ENCODE measurements at regions of chr5 and their contacts with region 1.

Region 1: GRCh38 chr5:141960449-141961202 is 2.6 kb upstream of the PCDH12 start:
- DNase-seq: peak; percentile 97
- H3K4me3 Mint-ChIP-seq: peak overlapping the region; percentile 33
- H3K27ac Mint-ChIP-seq: peak overlapping the region; percentile 74
- H3K4me1 Mint-ChIP-seq: peaks cover 38% of the 10 kb centered on the region
- H3K27me3 Mint-ChIP-seq: no peaks in the 10 kb centered on the region

Region 2: GRCh38 chr5:140658870-140659269 is 1301.8 kb before region 1 on chr5:
- CTCF ChIA-PET with region 1: no interaction called
- intact Hi-C with region 1: no loop called
- DNase-seq: no peak
- H3K4me3 Mint-ChIP-seq: no peak overlapping the region
- H3K27ac Mint-ChIP-seq: no peak overlapping the region
- H3K4me1 Mint-ChIP-seq: peaks cover 4% of the 10 kb centered on the region
- H3K27me3 Mint-ChIP-seq: no peaks in the 10 kb centered on the region

Region 3: GRCh38 chr5:141664732-141665461 is 295.7 kb before region 1 on chr5:
- CTCF ChIA-PET with region 1: interaction called, 18 read pairs
- intact Hi-C with region 1: loop called (anchors 1 kb)
- DNase-seq: peak; percentile 84
- H3K4me3 Mint-ChIP-seq: no peak overlapping the region
- H3K27ac Mint-ChIP-seq: no peak overlapping the region
- H3K4me1 Mint-ChIP-seq: peaks cover 2% of the 10 kb centered on the region
- H3K27me3 Mint-ChIP-seq: no peaks in the 10 kb centered on the region

Region 4: GRCh38 chr5:141701360-141702119 is 259.1 kb before region 1 on chr5:
- CTCF ChIA-PET with region 1: interaction called, 134 read pairs
- intact Hi-C with region 1: loop called (anchors 1 kb)
- DNase-seq: peak; percentile 36
- H3K4me3 Mint-ChIP-seq: peak overlapping the region; percentile 67
- H3K27ac Mint-ChIP-seq: no peak overlapping the region
- H3K4me1 Mint-ChIP-seq: peaks cover 15% of the 10 kb centered on the region
- H3K27me3 Mint-ChIP-seq: peaks cover 21% of the 10 kb centered on the region

Region 5: GRCh38 chr5:141889282-141889871 is 71.2 kb before region 1 on chr5:
- CTCF ChIA-PET with region 1: interaction called, 63 read pairs
- intact Hi-C with region 1: loop called (anchors 1 kb)
- DNase-seq: peak; percentile 29
- H3K4me3 Mint-ChIP-seq: no peak overlapping the region
- H3K27ac Mint-ChIP-seq: no peak overlapping the region
- H3K4me1 Mint-ChIP-seq: no peaks in the 10 kb centered on the region
- H3K27me3 Mint-ChIP-seq: peaks cover 24% of the 10 kb centered on the region

Region 6: DNA sequence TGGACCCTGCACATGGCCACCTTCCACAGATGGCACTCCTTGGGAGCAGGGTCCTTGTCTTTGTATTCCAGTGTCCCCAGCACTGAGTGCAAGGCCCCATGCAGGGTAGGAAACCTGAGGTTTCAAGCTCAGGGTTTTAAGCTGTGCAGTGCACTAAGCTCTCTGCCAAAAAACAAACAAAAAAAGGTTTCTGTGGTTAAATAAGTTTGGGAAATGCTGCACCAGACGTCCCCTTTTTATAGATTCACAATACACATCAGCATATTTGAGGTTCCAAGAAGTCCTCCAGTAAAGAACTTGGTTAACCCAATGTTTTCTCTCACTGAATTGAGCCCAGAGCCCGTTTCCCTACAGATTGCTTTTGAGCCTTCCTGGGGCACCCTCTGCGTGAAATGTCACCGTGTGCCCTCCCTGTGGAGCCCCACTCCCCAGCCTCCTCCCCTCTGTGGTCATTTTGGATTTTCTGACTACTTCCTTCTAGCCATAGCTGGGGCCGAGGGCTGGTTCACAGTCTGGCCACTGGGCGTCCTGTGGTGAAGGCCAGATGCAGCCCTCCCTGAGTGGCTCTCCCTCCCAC is 19.8 kb before region 1 on chr5:
- CTCF ChIA-PET with region 1: interaction called, 18 read pairs
- intact Hi-C with region 1: no loop called
- DNase-seq: no peak
- H3K4me3 Mint-ChIP-seq: no peak overlapping the region
- H3K27ac Mint-ChIP-seq: peak overlapping the region; percentile 62
- H3K4me1 Mint-ChIP-seq: no peaks in the 10 kb centered on the region
- H3K27me3 Mint-ChIP-seq: no peaks in the 10 kb centered on the region